ENCODE measurements at regions of chr4 and their contacts with region 1.

Region 1: GRCh38 chr4:13654158-13654797 is 26.8 kb upstream of the BOD1L1 start:
- DNase-seq: peak; percentile 68
- ATAC-seq: peak; percentile 97
- H3K4me3 ChIP-seq: peak overlapping the region; percentile 50
- H3K27ac ChIP-seq: peak overlapping the region; percentile 20
- H3K4me1 ChIP-seq: peaks cover 2% of the 10 kb centered on the region; the same call in 1 of the 2 replicates
- H3K27me3 ChIP-seq: no peaks in the 10 kb centered on the region
- CTCF ChIP-seq: peak; percentile 93
- POLR2A ChIP-seq: no peak
- RAD21 ChIP-seq: peak; percentile 81

Region 2: GRCh38 chr4:13640149-13640940 is 13.9 kb before region 1 on chr4:
- CTCF ChIA-PET with region 1: interaction called, 21 read pairs
- POLR2A ChIA-PET with region 1: no interaction called
- dilution Hi-C with region 1: no loop called
- in situ Hi-C with region 1: no loop called
- intact Hi-C with region 1: no loop called
- DNase-seq: peak; percentile 88
- ATAC-seq: peak; percentile 70
- H3K4me3 ChIP-seq: no peak overlapping the region
- H3K27ac ChIP-seq: no peak overlapping the region
- H3K4me1 ChIP-seq: peaks cover 9% of the 10 kb centered on the region
- H3K27me3 ChIP-seq: no peaks in the 10 kb centered on the region; the same call in 1 of the 2 replicates
- CTCF ChIP-seq: no peak
- POLR2A ChIP-seq: no peak
- RAD21 ChIP-seq: no peak

Region 3: GRCh38 chr4:13920901-13921300 is 266.6 kb after region 1 on chr4:
- CTCF ChIA-PET with region 1: no interaction called
- POLR2A ChIA-PET with region 1: no interaction called
- dilution Hi-C with region 1: no loop called
- in situ Hi-C with region 1: loop called (anchors 25 kb)
- intact Hi-C with region 1: loop called (anchors 2 kb)
- DNase-seq: peak; percentile 100
- ATAC-seq: peak; percentile 68
- H3K4me3 ChIP-seq: no peak overlapping the region
- H3K27ac ChIP-seq: peak overlapping the region; percentile 73; the same call in 1 of the 2 replicates
- H3K4me1 ChIP-seq: peaks cover 24% of the 10 kb centered on the region
- H3K27me3 ChIP-seq: no peaks in the 10 kb centered on the region
- CTCF ChIP-seq: no peak
- POLR2A ChIP-seq: no peak; the same call in 1 of the 2 replicates
- RAD21 ChIP-seq: peak; percentile 48

Region 4: GRCh38 chr4:14196131-14196530 is 541.9 kb after region 1 on chr4:
- CTCF ChIA-PET with region 1: no interaction called
- POLR2A ChIA-PET with region 1: no interaction called
- dilution Hi-C with region 1: no loop called
- in situ Hi-C with region 1: no loop called
- intact Hi-C with region 1: loop called (anchors 10 kb)
- DNase-seq: peak; percentile 69
- ATAC-seq: peak; percentile 87
- H3K4me3 ChIP-seq: no peak overlapping the region
- H3K27ac ChIP-seq: no peak overlapping the region
- H3K4me1 ChIP-seq: no peaks in the 10 kb centered on the region
- H3K27me3 ChIP-seq: no peaks in the 10 kb centered on the region
- CTCF ChIP-seq: no peak
- POLR2A ChIP-seq: no peak
- RAD21 ChIP-seq: 0 out of 2 replicates have a peak, but pooled peaks have one; percentile 11

Region 5: GRCh38 chr4:14513471-14513870 is 859.2 kb after region 1 on chr4:
- CTCF ChIA-PET with region 1: no interaction called
- POLR2A ChIA-PET with region 1: no interaction called
- dilution Hi-C with region 1: no loop called
- in situ Hi-C with region 1: no loop called
- intact Hi-C with region 1: loop called (anchors 10 kb)
- DNase-seq: no peak
- ATAC-seq: no peak
- H3K4me3 ChIP-seq: no peak overlapping the region
- H3K27ac ChIP-seq: no peak overlapping the region
- H3K4me1 ChIP-seq: no peaks in the 10 kb centered on the region
- H3K27me3 ChIP-seq: no peaks in the 10 kb centered on the region
- CTCF ChIP-seq: no peak
- POLR2A ChIP-seq: no peak
- RAD21 ChIP-seq: no peak

Region 6: DNA sequence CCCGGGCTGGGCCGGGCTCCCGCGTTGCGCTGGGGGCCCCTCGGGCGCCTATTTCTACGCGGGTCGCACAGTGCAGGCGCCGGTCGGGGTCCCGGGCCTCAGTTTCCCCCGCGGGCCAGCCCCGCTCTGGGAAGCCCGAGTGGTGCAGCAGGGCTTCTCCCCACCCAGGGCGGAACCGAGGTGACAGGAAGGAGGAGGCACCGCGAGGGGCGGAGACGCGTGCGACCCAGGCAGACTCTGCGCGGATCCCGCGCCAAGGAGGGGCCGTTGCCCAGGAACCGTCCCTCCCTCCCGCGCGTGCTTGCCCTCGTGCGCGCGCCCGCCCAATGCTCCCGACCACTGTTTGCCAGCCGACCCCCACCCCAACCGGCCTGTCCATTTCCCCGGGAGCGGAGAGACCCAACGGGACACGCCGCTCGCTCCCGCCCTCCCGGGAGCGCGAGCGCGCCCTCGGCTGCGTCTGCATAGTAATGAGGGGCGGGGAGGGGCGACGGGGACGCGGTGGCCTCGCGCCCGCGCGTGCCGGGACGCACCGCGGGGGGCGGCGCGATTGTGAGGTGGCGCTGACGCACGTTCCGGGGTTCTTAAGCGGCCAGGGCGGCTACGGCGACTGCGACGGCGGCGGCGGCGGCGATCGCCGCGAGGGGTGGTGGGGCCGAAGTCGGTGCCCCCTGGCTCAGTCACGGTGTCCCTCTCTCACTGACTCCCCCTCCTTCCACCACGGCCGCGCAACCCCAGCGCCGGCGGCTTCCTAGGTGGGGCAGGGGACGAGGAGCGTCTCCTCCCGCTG is 1347.8 kb after region 1 on chr4 and contains the start of gene CPEB2:
- CTCF ChIA-PET with region 1: no interaction called
- POLR2A ChIA-PET with region 1: interaction called, 5 read pairs
- dilution Hi-C with region 1: no loop called
- in situ Hi-C with region 1: loop called (anchors 10 kb)
- intact Hi-C with region 1: loop called (anchors 1 kb)
- DNase-seq: peak; percentile 97
- ATAC-seq: peak; percentile 65
- H3K4me3 ChIP-seq: peak within 1 kb of the TSS; percentile 69
- H3K27ac ChIP-seq: peak within 1 kb of the TSS; percentile 93
- H3K4me1 ChIP-seq: no peaks in the 10 kb centered on the region
- H3K27me3 ChIP-seq: no peaks in the 10 kb centered on the region
- CTCF ChIP-seq: no peak
- POLR2A ChIP-seq: peak; percentile 96
- RAD21 ChIP-seq: no peak
- total RNA-seq, gene CPEB2: 10.6 and 18.1 TPM in 2 replicates